ENCODE measurements at regions of chr14 and their contacts with region 1.

Region 1: DNA sequence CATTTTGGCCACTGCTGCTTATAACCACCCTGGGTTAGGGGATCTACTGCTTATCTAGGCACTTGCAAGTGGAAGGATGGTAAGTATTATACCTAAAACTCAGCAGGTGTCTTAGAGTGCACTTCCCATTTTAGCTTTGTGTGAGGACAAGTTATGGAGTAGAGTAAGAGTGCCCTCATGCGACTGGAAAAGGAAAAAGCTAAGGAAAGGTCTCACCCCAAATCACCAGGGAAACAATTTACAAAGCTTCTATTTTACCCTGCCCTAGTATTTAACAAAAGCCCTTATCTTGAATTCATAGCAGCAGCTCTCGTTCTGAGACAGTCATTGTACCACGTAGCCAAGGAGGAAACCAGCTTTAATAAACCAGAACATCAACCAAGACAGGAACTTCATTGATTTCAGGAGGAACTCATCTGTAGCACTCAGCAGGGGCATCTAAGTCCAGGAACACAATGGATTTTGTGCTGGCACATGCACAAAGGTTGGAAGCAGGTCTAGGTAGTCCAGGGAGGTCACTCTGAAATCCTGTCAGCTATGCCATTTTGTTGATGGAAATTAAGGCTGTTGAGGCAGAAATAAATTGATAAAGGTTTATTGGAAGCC is 2.9 kb downstream of the RDH12 start:
- DNase-seq: peak in 1 of 2 experiments; percentile 64
- H3K4me3 ChIP-seq: no peak overlapping the region
- H3K4me3 Mint-ChIP-seq: no peak overlapping the region
- H3K27ac Mint-ChIP-seq: no peak overlapping the region
- H3K4me1 ChIP-seq: no peaks in the 10 kb centered on the region
- H3K4me1 Mint-ChIP-seq: no peaks in the 10 kb centered on the region
- H3K27me3 ChIP-seq: no peaks in the 10 kb centered on the region
- H3K27me3 Mint-ChIP-seq: no peaks in the 10 kb centered on the region
- CTCF ChIP-seq: peak; percentile 73 to 78

Region 2: DNA sequence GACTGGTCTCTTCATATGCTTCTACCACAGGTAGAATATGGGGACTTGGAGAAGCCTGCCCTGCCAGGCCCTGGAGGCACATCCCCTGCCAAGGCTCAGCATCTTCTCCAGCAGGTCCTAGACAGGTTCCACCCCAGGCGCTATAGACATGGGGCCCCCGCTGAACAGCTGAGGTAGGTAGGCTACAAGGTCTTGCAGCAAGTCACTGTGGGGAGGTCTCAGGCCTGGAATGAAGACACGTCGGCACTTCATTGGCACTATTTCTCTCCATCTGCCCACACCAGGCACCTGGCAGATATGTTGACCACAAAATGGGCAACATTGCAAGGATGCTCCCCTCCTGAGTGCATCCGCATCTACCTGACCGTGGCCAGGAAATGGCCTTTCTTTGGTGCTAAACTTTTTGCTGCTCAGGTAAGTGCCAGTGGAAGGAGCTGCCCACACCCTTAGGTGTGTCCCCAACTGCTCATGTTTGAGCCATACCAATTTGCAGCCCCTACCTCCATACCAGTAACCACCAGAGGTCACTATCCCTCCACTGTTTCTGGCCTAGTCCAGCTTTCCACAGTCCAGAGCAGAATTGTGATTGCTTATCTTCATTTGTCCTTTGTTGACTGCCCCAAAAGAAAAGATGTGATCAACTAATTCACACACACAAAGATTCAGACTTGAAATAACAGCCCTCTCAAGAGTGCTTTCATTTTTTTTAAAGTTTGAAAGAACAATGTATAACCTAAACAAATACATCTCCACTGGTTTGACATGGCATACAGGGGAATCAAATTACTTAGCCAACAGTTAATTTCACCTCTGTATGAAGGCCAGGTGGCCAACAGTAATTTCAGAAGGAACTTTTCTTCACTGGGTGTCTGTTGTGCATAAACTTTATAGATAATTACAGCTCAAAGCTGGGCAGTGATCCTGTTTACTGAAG is 120.6 kb before region 1 on chr14:
- CTCF ChIA-PET with region 1: interaction called, 30 read pairs
- POLR2A ChIA-PET with region 1: no interaction called
- intact Hi-C with region 1: loop called (anchors 1 kb)
- DNase-seq: peak; percentile 62 to 73
- H3K4me3 ChIP-seq: no peak overlapping the region
- H3K4me3 Mint-ChIP-seq: no peak overlapping the region
- H3K27ac Mint-ChIP-seq: no peak overlapping the region
- H3K4me1 ChIP-seq: peaks cover 13% of the 10 kb centered on the region
- H3K4me1 Mint-ChIP-seq: no peaks in the 10 kb centered on the region
- H3K27me3 ChIP-seq: no peaks in the 10 kb centered on the region
- H3K27me3 Mint-ChIP-seq: no peaks in the 10 kb centered on the region
- CTCF ChIP-seq: peak; percentile 78 to 82

Region 3: DNA sequence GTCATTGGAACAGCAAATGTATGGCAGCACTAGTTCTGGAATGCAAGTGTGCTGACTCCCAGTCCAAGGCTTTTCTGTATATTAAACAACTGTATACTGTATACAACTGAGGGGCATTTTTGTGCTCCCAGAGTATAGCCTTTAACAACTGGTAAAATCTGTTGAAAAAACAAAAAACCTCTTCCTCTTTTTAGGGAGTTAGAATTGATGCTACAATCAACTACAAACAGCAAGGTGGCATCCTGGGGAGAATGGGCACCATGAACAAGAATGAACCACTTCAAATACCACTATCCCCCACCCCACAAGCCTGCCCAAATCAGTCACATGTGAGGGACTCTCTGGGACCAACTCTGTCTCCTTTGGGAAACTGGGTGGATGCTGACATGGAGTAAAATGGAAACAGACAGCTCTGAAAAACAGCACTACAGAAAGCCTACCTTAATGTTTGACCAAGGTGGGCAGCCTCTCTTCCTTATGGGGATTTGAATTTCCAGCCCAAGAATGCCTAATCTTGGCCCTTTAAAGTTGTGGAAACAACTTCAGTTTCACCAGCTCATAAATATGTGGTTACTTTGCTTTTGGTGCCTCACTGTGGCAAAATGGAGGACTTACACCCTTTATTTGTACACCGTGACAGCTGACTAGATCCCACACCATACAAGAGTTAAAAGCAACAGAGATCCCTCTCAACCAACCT is 37.7 kb before region 1 on chr14:
- CTCF ChIA-PET with region 1: interaction called, 17 read pairs
- POLR2A ChIA-PET with region 1: interaction called, 6 read pairs
- intact Hi-C with region 1: loop called (anchors 1 kb)
- DNase-seq: peak in 1 of 2 experiments; percentile 45
- H3K4me3 ChIP-seq: no peak overlapping the region
- H3K4me3 Mint-ChIP-seq: no peak overlapping the region
- H3K27ac Mint-ChIP-seq: no peak overlapping the region
- H3K4me1 ChIP-seq: no peaks in the 10 kb centered on the region
- H3K4me1 Mint-ChIP-seq: no peaks in the 10 kb centered on the region
- H3K27me3 ChIP-seq: no peaks in the 10 kb centered on the region
- H3K27me3 Mint-ChIP-seq: no peaks in the 10 kb centered on the region
- CTCF ChIP-seq: peak; percentile 58 to 62

Region 4: GRCh38 chr14:67729072-67729885 is 24.7 kb after region 1 on chr14:
- CTCF ChIA-PET with region 1: no interaction called
- POLR2A ChIA-PET with region 1: no interaction called
- intact Hi-C with region 1: no loop called
- DNase-seq: peak in 1 of 2 experiments; percentile 21
- H3K4me3 ChIP-seq: no peak overlapping the region
- H3K4me3 Mint-ChIP-seq: no peak overlapping the region
- H3K27ac Mint-ChIP-seq: no peak overlapping the region
- H3K4me1 ChIP-seq: no peaks in the 10 kb centered on the region
- H3K4me1 Mint-ChIP-seq: no peaks in the 10 kb centered on the region
- H3K27me3 ChIP-seq: no peaks in the 10 kb centered on the region; the same call in 1 of the 2 replicates
- H3K27me3 Mint-ChIP-seq: no peaks in the 10 kb centered on the region
- CTCF ChIP-seq: no peak

Region 5: DNA sequence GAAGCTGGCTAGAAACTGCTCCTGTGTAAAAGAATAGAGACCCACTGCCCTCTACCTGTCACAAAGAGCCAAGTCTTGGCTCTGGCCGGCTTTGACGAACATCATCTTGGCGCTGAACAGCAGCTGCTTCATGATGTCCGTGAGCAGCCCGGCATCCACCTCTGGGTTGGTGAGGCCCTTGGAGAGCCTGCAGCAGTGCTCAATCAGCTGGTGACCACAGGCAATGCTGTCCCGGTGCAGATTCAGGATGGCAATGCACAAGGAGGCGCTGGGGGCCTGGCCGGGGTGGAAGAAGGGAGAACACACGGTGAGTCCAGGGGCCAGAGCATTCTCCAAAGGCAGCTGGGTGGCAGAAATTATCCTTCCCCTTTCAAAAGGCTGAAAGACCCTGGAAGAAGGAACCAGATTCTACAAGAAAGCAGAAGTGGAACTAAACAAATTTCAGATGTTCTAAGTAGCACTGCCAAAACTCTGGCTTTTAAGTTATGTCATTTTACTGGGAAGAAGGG is 61.6 kb after region 1 on chr14:
- CTCF ChIA-PET with region 1: interaction called, 14 read pairs
- POLR2A ChIA-PET with region 1: no interaction called
- intact Hi-C with region 1: loop called (anchors 5 kb)
- DNase-seq: peak in 1 of 2 experiments; percentile 14
- H3K4me3 ChIP-seq: no peak overlapping the region
- H3K4me3 Mint-ChIP-seq: no peak overlapping the region
- H3K27ac Mint-ChIP-seq: no peak overlapping the region
- H3K4me1 ChIP-seq: peaks cover 28% of the 10 kb centered on the region
- H3K4me1 Mint-ChIP-seq: peaks cover 32% of the 10 kb centered on the region
- H3K27me3 ChIP-seq: no peaks in the 10 kb centered on the region
- H3K27me3 Mint-ChIP-seq: no peaks in the 10 kb centered on the region
- CTCF ChIP-seq: peak; percentile 19 to 24